Activated T-helper 1 cell treated with anti-CD3 and anti-CD28 coated beads, Interleukin-12 subunit alpha, Interleukin-12 subunit beta, Interleukin-2, Interleukin-4 antibody, amounts not matched to agents 30 ng/mL and 10 ng/mL and 1 ng/mL, durations not matched to agents 14 hours and 24 hours and 36 hours (primary cell): ENCODE measurements at regions of chr5 and their contacts with region 1.

Region 1: GRCh38 chr5:157026789-157027424 is 32.0 kb downstream of the HAVCR1 start:
- DNase-seq: no peak
- H3K4me3 Mint-ChIP-seq: no peak overlapping the region
- H3K27ac Mint-ChIP-seq: peak overlapping the region; percentile 90
- H3K4me1 Mint-ChIP-seq: peaks cover 81% of the 10 kb centered on the region
- H3K27me3 Mint-ChIP-seq: peaks cover 3% of the 10 kb centered on the region

Region 2: GRCh38 chr5:156402387-156402921 is 624.5 kb before region 1 on chr5:
- intact Hi-C with region 1: loop called (anchors 1 kb)
- DNase-seq: peak; percentile 59
- H3K4me3 Mint-ChIP-seq: peak overlapping the region; percentile 53
- H3K27ac Mint-ChIP-seq: peak overlapping the region; percentile 79
- H3K4me1 Mint-ChIP-seq: peaks cover 18% of the 10 kb centered on the region
- H3K27me3 Mint-ChIP-seq: peaks cover 7% of the 10 kb centered on the region

Region 3: DNA sequence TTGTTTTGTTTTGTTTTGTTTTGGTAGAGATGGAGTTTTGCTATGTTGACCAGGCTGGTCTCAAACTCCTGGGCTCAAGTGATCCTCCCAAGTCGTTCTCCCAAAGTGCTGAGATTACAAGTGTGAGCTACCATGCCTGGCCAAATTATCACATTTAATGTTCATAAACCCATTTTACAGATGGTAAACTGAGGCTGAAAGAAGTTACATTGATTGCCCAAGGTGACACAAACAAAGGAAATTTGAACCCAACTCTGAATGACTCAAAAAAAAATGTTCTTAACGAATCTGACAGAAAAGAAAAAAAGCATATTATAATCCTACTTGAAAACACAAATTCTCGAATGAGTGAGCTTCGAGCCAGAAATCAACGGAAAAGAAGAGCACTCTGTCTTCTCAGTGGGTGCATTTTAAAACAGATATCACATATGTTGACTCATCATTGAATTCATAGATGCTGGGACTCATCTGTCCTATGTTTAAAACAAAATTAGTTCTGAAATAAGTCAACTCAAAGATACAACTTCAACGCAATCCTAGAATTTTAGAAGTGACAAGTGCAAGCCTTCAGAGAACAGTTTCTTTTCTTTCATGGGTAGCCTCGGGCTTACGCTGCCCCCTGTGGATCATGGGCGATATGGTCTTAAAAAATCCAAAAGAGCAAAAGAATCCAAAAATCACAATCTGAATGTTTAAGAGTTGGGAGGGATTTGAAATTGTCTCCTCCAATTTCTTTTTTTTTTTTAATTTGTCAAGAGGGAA is 92.3 kb before region 1 on chr5:
- intact Hi-C with region 1: loop called (anchors 1 kb)
- DNase-seq: peak; percentile 62
- H3K4me3 Mint-ChIP-seq: peak overlapping the region; percentile 49
- H3K27ac Mint-ChIP-seq: peak overlapping the region; percentile 94
- H3K4me1 Mint-ChIP-seq: peaks cover 88% of the 10 kb centered on the region
- H3K27me3 Mint-ChIP-seq: no peaks in the 10 kb centered on the region

Region 4: GRCh38 chr5:157004893-157005551 is 21.9 kb before region 1 on chr5:
- intact Hi-C with region 1: loop called (anchors 1 kb)
- DNase-seq: no peak
- H3K4me3 Mint-ChIP-seq: peak overlapping the region; percentile 7
- H3K27ac Mint-ChIP-seq: peak overlapping the region; percentile 76
- H3K4me1 Mint-ChIP-seq: peaks cover 46% of the 10 kb centered on the region
- H3K27me3 Mint-ChIP-seq: no peaks in the 10 kb centered on the region

Region 5: DNA sequence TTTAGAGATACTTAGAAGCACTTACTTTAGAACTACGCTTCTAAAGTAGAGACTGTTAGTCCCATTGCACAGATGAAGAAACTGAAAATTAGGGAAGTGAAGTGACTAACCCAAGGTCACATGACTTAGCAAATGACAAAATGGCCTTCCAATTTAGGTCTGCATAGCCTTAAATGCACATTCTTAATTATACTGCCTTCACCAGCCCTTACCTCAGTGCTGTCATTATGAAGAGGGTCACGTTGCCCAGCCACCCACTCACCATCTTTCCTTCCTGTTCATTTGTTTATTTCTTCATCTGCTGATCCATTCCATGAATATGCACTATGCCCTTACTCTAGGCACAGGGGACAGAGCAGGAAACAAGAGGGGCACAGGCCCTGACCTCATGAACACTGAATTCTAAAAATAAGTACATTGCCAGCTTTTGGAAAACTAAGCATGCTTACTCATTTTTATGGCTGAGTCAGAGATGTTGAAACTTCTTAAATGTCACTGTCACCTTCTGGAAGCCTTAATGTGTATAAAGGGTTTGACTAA is 73.3 kb after region 1 on chr5:
- intact Hi-C with region 1: loop called (anchors 1 kb)
- DNase-seq: no peak
- H3K4me3 Mint-ChIP-seq: peak overlapping the region; percentile 54
- H3K27ac Mint-ChIP-seq: peak overlapping the region; percentile 95
- H3K4me1 Mint-ChIP-seq: peaks cover 50% of the 10 kb centered on the region
- H3K27me3 Mint-ChIP-seq: no peaks in the 10 kb centered on the region

Region 6: DNA sequence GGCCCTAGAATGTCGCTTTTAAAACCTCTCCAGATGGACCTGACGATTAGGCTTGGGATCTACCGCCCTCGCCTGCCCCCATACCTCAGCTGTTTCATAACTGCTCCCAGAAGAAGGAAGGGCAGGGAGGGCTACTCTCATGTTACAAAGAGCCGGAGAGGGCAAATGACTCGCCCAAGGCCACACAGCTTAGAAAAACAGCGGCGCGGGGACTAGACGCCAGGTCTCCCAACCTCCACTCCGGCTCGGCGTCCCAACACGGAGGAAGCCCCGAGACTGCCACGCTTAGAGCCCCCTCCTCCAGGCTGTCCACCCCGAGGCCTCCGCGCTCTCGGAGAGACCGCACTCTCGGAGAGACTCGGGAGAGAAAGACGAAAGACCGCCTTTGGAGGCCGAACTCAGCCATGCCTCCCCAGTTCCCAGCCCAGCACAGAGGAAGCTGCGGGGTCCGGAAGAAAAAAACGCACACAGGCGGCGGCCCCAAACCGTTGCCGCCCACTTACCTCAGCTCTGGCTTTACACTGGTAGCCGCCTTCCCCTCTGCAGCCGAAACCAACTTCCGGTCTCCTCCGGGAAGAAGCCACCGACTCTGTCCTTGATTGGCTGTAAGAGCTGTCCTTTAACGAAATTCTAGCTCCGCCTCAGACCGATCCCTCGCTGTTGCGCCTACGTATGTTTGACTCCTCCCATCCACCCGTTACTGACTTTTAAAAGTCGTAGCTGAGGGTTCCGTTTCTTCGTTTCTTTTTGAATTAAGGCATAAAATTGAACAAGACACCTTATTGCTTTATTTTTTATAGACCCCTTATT is 115.6 kb after region 1 on chr5 and contains the start of gene MED7:
- intact Hi-C with region 1: loop called (anchors 1 kb)
- DNase-seq: peak; percentile 95
- H3K4me3 Mint-ChIP-seq: peak within 1 kb of the TSS; percentile 95
- H3K27ac Mint-ChIP-seq: peak within 1 kb of the TSS; percentile 99
- H3K4me1 Mint-ChIP-seq: peaks cover 42% of the 10 kb centered on the region
- H3K27me3 Mint-ChIP-seq: no peaks in the 10 kb centered on the region
- total RNA-seq, gene MED7: 15.0 and 15.5 TPM in 2 replicates

Region 7: GRCh38 chr5:157596487-157596886 is 569.6 kb after region 1 on chr5:
- intact Hi-C with region 1: loop called (anchors 5 kb)
- DNase-seq: peak; percentile 51
- H3K4me3 Mint-ChIP-seq: peak overlapping the region; percentile 46
- H3K27ac Mint-ChIP-seq: peak overlapping the region; percentile 75
- H3K4me1 Mint-ChIP-seq: peaks cover 91% of the 10 kb centered on the region
- H3K27me3 Mint-ChIP-seq: no peaks in the 10 kb centered on the region